ENCODE measurements at regions of chr4 and their contacts with region 1.

Region 1: GRCh38 chr4:87235020-87235671 is 14.7 kb upstream of the KLHL8 start:
- DNase-seq: no peak
- H3K4me3 ChIP-seq: peak overlapping the region; percentile 25 to 64 (median 44)
- H3K27ac ChIP-seq: peak overlapping the region in 1 of 4 donors; percentile 46
- H3K4me1 ChIP-seq: peaks cover 0 to 17% (median 4%) of the 10 kb centered on the region in 3 donors
- H3K27me3 ChIP-seq: no peaks in the 10 kb centered on the region
- CTCF ChIP-seq: no peak
- POLR2A ChIP-seq: no peak

Region 2: DNA sequence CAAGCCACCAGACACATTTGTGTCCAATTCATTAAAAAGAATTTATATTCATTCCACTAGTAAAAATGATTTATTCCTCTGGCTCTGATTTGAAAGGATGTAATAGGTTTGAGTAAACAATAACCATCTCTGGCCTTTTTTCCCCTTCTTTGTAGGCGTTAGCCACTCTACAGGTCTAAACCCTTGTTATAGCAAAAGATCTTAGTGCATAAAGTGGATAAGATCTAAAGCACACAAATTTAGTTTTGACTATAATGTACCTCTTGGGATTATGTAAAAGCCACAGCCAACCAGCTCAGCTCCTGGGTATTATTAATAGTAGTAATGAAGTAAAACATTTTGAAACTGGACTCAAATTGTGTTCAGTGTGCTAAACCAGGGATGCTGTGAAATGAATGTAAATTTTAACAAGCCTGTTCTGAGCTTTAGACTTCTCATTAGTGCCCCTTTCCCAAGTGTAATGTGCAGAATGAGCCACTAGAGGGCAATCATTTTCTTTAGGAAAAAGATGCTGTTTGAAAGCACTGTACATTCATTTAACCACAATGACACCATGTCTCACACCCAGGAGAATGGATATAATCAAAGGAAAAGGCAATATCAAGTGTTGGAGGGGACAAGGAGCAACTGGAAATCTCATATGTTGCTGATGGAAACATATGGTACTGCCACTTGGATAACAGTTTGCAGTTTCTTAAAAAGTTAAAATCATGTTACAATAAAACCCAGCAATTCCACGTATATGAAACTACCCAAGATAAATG is 84.5 kb before region 1 on chr4:
- intact Hi-C with region 1: loop called (anchors 5 kb)
- DNase-seq: no peak
- H3K4me3 ChIP-seq: no peak overlapping the region
- H3K27ac ChIP-seq: no peak overlapping the region
- H3K4me1 ChIP-seq: no peaks in the 10 kb centered on the region
- H3K27me3 ChIP-seq: no peaks in the 10 kb centered on the region
- CTCF ChIP-seq: peak; percentile 85 to 95 (median 92)
- POLR2A ChIP-seq: no peak

Region 3: GRCh38 chr4:87286970-87287369 is 51.8 kb after region 1 on chr4:
- intact Hi-C with region 1: no loop called
- DNase-seq: no peak
- H3K4me3 ChIP-seq: no peak overlapping the region
- H3K27ac ChIP-seq: no peak overlapping the region
- H3K4me1 ChIP-seq: no peaks in the 10 kb centered on the region
- H3K27me3 ChIP-seq: no peaks in the 10 kb centered on the region
- CTCF ChIP-seq: no peak
- POLR2A ChIP-seq: no peak

Region 4: GRCh38 chr4:87423317-87424098 is 188.4 kb after region 1 on chr4:
- intact Hi-C with region 1: no loop called
- DNase-seq: no peak
- H3K4me3 ChIP-seq: peak overlapping the region; percentile 74 to 86 (median 82)
- H3K27ac ChIP-seq: peak overlapping the region in 3 of 4 donors; percentile 90 to 95 (median 93)
- H3K4me1 ChIP-seq: peaks cover 5 to 54% (median 18%) of the 10 kb centered on the region in 3 donors
- H3K27me3 ChIP-seq: no peaks in the 10 kb centered on the region
- CTCF ChIP-seq: no peak
- POLR2A ChIP-seq: no peak

Measured in esophagus squamous epithelium (tissue), 5 donors.